Caco-2 (cell line): ENCODE measurements at regions of chr16 and their contacts with region 1.

Region 1: DNA sequence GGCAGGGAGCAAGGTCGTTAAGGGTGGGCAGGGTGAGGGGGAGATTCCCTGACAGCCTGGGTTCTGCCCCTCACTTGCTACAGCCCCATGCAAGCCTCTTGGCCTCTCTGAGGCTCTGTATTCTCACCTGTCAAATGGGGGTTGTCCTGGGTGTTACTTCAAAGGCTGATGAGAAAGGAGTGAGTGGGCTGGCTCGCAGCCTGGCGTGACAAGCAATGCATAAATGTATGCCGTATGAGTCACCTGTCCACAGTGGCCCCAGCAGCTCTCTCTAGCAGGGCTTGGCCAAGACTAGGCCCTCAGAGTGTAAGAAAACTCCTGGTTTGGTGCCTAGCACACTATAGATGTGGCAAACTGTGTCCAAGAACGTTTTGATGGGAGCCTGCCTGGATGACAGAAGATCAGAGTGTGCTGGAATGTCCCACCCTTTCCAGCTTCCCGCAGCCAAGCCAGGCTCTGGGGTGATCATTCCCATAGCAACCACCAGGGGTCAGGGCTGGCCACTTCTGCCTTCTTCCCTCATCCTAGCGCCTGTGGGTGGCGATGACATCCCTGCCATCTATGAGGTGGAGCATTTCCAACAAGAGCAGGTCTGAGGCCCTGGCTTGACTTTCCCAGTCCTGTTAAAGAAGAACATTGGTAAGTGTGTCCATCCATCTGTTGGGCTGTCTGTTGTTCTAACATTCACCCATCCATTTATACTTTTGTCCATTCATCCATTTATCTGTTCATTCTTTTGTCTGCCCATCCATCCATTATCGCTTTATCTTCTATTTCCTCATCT is 37.2 kb upstream of the ADGRG1 start:
- DNase-seq: peak; percentile 78 to 89
- H3K4me3 ChIP-seq: no peak overlapping the region
- H3K4me3 Mint-ChIP-seq: no peak overlapping the region
- H3K27ac Mint-ChIP-seq: peak overlapping the region; percentile 29
- H3K4me1 ChIP-seq: peaks cover 10% of the 10 kb centered on the region
- H3K4me1 Mint-ChIP-seq: peaks cover 8% of the 10 kb centered on the region
- H3K27me3 ChIP-seq: no peaks in the 10 kb centered on the region
- H3K27me3 Mint-ChIP-seq: no peaks in the 10 kb centered on the region
- CTCF ChIP-seq: peak; percentile 97

Region 2: DNA sequence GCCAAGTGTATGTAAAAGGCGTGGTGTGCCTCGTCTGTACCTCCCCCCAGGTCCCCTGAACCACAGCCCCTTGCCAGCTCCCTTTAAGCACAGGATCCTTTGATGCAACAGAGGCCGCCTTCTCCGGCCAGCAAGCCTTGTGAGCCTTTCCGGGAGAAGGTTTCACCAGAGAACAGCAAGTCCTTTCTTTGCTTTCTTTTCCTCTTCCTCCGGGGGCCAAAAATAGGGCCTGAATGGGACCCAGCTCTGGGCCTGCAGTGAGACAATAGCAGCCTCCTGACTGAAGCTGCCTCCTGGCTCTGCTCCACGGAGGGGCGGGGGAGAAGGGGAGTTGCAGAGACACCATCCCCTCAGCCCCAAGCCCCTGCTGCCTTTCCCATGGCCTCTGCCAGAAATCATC is 46.1 kb after region 1 on chr16:
- CTCF ChIA-PET with region 1: interaction called, 13 read pairs
- POLR2A ChIA-PET with region 1: no interaction called
- intact Hi-C with region 1: no loop called
- DNase-seq: no peak
- H3K4me3 ChIP-seq: no peak overlapping the region
- H3K4me3 Mint-ChIP-seq: no peak overlapping the region
- H3K27ac Mint-ChIP-seq: no peak overlapping the region
- H3K4me1 ChIP-seq: peaks cover 18% of the 10 kb centered on the region
- H3K4me1 Mint-ChIP-seq: peaks cover 11% of the 10 kb centered on the region
- H3K27me3 ChIP-seq: no peaks in the 10 kb centered on the region
- H3K27me3 Mint-ChIP-seq: no peaks in the 10 kb centered on the region
- CTCF ChIP-seq: no peak

Region 3: GRCh38 chr16:57648590-57649442 is 57.5 kb after region 1 on chr16:
- CTCF ChIA-PET with region 1: interaction called, 24 read pairs
- POLR2A ChIA-PET with region 1: no interaction called
- intact Hi-C with region 1: loop called (anchors 1 kb)
- DNase-seq: peak; percentile 85 to 93
- H3K4me3 ChIP-seq: no peak overlapping the region
- H3K4me3 Mint-ChIP-seq: no peak overlapping the region
- H3K27ac Mint-ChIP-seq: no peak overlapping the region
- H3K4me1 ChIP-seq: peaks cover 10% of the 10 kb centered on the region; the same call in 1 of the 2 replicates
- H3K4me1 Mint-ChIP-seq: peaks cover 14% of the 10 kb centered on the region
- H3K27me3 ChIP-seq: no peaks in the 10 kb centered on the region
- H3K27me3 Mint-ChIP-seq: no peaks in the 10 kb centered on the region
- CTCF ChIP-seq: peak; percentile 100